CD14-positive monocyte (primary cell): ENCODE measurements at regions of chr11 and their contacts with region 1.

Region 1: DNA sequence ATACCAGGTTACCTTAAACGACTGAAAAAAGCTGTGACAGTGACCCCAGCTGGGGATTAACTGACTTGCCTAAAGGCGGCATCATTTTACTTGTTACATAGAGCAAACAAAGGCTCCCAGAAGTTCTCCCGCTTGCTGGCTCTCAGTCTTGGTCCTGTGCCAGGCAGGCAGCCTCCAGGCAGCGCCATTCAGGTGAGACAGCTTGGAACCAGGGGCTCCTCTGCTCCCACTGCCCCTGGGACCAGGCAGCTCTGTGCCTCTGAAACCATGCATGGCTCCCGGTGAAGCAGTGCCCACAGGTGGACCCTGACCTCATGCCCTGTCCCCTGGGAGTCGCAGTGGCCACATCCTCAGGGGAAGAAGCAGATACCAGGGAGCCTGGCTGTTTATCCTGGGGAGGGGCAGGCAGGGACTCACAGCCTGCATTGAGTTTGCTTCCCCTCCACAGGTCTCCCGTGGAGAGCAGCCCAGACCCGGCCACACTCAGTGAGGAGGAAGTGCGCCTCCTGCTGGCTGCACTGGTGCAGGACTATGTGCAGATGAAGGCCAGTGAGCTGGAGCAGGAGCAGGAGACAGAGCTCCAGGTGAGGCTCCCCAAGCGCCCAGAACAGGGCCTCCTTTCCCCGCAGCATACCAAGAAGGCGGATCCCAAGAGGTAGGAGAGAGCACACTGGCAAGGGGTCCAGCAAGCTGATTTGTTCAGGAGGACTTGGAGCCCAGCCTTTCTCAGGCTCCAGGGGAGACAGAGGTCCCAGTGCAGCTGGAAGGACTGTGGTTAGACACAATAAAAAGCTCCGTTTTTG is 15.6 kb upstream of the CYP2R1 start:
- DNase-seq: peak; percentile 69 to 79 (median 79)
- H3K4me3 ChIP-seq: no peak overlapping the region
- H3K4me3 Mint-ChIP-seq: no peak overlapping the region
- H3K27ac ChIP-seq: no peak overlapping the region
- H3K27ac Mint-ChIP-seq: no peak overlapping the region
- H3K4me1 ChIP-seq: peaks cover 21 to 34% of the 10 kb centered on the region in 2 donors
- H3K4me1 Mint-ChIP-seq: peaks cover 32% of the 10 kb centered on the region
- H3K27me3 ChIP-seq: peaks cover 0 to 8% of the 10 kb centered on the region in 2 donors
- H3K27me3 Mint-ChIP-seq: peaks cover 16 to 35% (median 22%) of the 10 kb centered on the region in 3 donors
- CTCF ChIP-seq: peak; percentile 93

Region 2: GRCh38 chr11:14537134-14537599 is 370.4 kb before region 1 on chr11:
- intact Hi-C with region 1: loop called in 1 of 2 experiments (anchors 5 kb)
- DNase-seq: peak; percentile 37 to 70 (median 69)
- H3K4me3 ChIP-seq: peak overlapping the region; percentile 21 to 67 (median 49)
- H3K4me3 Mint-ChIP-seq: peak overlapping the region; percentile 51 to 59
- H3K27ac ChIP-seq: peak overlapping the region in 1 of 2 donors; percentile 86
- H3K27ac Mint-ChIP-seq: peak overlapping the region; percentile 79 to 92 (median 89)
- H3K4me1 ChIP-seq: peaks cover 34 to 41% of the 10 kb centered on the region in 2 donors
- H3K4me1 Mint-ChIP-seq: peaks cover 33% of the 10 kb centered on the region
- H3K27me3 ChIP-seq: no peaks in the 10 kb centered on the region
- H3K27me3 Mint-ChIP-seq: no peaks in the 10 kb centered on the region
- CTCF ChIP-seq: peak; percentile 87

Region 3: DNA sequence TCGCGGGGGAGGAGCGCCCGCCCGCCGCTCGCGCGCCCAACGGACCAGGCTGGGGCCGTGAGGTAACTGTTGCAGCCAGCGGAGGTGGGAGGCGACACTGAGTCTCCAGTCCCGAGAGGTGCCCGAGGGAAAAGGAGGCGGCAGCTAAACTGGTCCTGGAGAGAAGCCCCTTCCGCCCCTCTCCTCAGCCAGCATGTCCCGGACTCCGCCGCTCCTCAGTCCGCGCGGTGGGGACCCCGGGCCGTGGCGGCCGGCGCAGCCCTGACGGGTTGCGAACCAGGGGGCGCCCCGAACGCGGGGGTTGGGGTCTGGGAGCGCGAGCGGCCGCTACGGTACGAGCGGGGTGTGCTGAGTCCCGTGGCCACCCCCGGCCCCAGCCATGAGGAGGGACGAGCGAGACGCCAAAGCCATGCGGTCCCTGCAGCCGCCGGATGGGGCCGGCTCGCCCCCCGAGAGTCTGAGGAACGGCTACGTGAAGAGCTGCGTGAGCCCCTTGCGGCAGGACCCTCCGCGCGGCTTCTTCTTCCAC is 263.9 kb before region 1 on chr11 and contains the start of gene PDE3B:
- intact Hi-C with region 1: loop called (anchors 10 kb)
- DNase-seq: peak in 2 of 3 donors; percentile 55 to 59
- H3K4me3 ChIP-seq: peak within 1 kb of the TSS; percentile 71 to 98 (median 94)
- H3K4me3 Mint-ChIP-seq: peak within 1 kb of the TSS; percentile 96
- H3K27ac ChIP-seq: peak within 1 kb of the TSS; percentile 59 to 80
- H3K27ac Mint-ChIP-seq: peak within 1 kb of the TSS; percentile 79 to 91 (median 88)
- H3K4me1 ChIP-seq: peaks cover 19 to 29% of the 10 kb centered on the region in 2 donors
- H3K4me1 Mint-ChIP-seq: peaks cover 38% of the 10 kb centered on the region
- H3K27me3 ChIP-seq: no peaks in the 10 kb centered on the region
- H3K27me3 Mint-ChIP-seq: peaks cover 0 to 2% (median 1%) of the 10 kb centered on the region in 3 donors
- CTCF ChIP-seq: no peak
- polyA plus RNA-seq, gene PDE3B: 4.0 to 6.0 (median 5.2) TPM

Region 4: DNA sequence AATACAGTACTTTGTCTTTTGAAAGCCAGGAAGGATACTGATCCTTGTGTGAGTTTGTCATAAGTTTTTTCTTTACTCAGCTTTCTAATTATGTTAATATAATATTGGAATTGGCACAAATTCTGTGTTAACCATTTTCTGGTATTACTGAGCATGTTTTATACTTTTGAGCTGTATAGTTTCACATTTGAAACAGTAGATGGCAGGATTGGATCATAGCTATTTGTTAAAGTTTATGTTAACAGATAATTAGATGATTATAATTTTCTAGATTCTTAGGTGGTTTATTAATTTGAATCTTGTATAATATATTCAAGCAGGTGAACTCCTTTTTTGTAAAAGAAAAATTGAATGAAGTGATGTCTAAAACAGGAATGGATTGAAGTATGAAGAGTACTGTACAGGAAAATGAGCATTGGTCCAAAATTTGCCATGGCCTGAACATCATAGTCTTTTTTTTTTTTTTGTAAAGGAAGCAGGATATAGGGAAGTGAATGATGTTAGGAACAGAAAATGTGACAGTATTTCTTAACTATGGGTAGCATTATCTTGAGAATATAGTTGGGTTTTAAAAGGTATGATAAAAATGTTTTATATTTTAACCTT is 117.6 kb before region 1 on chr11:
- intact Hi-C with region 1: loop called (anchors 2 to 5 kb)
- DNase-seq: peak in 1 of 3 donors; percentile 16
- H3K4me3 ChIP-seq: no peak overlapping the region
- H3K4me3 Mint-ChIP-seq: no peak overlapping the region
- H3K27ac ChIP-seq: no peak overlapping the region
- H3K27ac Mint-ChIP-seq: no peak overlapping the region
- H3K4me1 ChIP-seq: no peaks in the 10 kb centered on the region
- H3K4me1 Mint-ChIP-seq: no peaks in the 10 kb centered on the region
- H3K27me3 ChIP-seq: no peaks in the 10 kb centered on the region
- H3K27me3 Mint-ChIP-seq: no peaks in the 10 kb centered on the region
- CTCF ChIP-seq: peak; percentile 67